Mammary epithelial cell (primary cell): ENCODE measurements at regions of chr3 and their contacts with region 1.

Region 1: GRCh38 chr3:184423561-184423960 is 43.7 kb downstream of the CHRD start:
- DNase-seq: peak; percentile 15
- H3K4me3 ChIP-seq: no peak overlapping the region
- H3K27ac ChIP-seq: no peak overlapping the region
- H3K4me1 ChIP-seq: peaks cover 5% of the 10 kb centered on the region
- H3K27me3 ChIP-seq: peaks cover 3% of the 10 kb centered on the region
- CTCF ChIP-seq: no peak

Region 2: DNA sequence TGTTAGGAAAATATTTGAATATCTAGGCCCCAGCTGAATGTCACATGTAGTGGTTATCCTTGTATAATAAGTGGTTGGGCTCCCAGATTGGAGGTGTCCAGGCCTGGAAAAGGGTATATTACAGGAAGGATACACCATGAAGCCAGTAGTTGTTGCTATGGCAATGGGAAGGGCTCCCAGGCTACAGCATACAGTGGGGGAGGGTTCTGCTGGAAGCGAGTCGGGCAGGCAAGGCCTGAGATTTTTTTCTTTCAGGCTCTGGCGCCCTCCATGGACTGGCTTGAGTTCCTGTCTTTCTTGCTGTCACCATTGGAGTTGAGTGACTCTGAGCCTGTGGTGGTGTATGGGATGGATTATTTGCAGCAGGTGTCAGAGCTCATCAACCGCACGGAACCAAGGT is 138.9 kb before region 1 on chr3:
- CTCF ChIA-PET with region 1: no interaction called
- dilution Hi-C with region 1: no loop called
- in situ Hi-C with region 1: no loop called
- intact Hi-C with region 1: no loop called
- DNase-seq: peak; percentile 50
- H3K4me3 ChIP-seq: no peak overlapping the region
- H3K27ac ChIP-seq: no peak overlapping the region
- H3K4me1 ChIP-seq: no peaks in the 10 kb centered on the region
- H3K27me3 ChIP-seq: no peaks in the 10 kb centered on the region
- CTCF ChIP-seq: peak; percentile 48 to 62

Region 3: GRCh38 chr3:184380191-184380626 is 43.4 kb before region 1 on chr3:
- CTCF ChIA-PET with region 1: no interaction called
- dilution Hi-C with region 1: no loop called
- in situ Hi-C with region 1: no loop called
- intact Hi-C with region 1: no loop called
- DNase-seq: no peak
- H3K4me3 ChIP-seq: peak overlapping the region in 2 of 3 experiments; percentile 15 to 43
- H3K27ac ChIP-seq: no peak overlapping the region
- H3K4me1 ChIP-seq: peaks cover 3% of the 10 kb centered on the region
- H3K27me3 ChIP-seq: peaks cover 18% of the 10 kb centered on the region
- CTCF ChIP-seq: no peak

Region 4: DNA sequence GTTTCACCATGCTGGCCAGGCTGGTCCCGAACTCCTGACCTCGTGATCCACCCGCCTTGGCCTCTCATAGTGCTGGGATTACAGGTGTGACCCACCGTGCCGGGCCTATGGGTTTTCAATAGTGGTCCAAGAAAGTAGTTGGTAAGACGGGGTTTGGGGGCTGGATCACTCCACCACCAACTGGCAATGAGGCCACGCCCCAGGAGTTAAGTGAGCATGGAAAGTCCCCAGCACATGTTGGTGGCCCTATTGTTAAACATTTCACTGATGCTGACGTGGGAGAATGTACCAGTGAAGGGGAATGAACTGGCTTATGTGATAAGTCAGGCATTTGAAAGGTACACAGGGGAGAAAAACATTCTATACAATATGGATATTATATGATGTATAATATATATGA is 36.7 kb after region 1 on chr3:
- CTCF ChIA-PET with region 1: no interaction called
- dilution Hi-C with region 1: loop called (anchors 5 kb)
- in situ Hi-C with region 1: loop called (anchors 5 kb)
- intact Hi-C with region 1: no loop called
- DNase-seq: no peak
- H3K4me3 ChIP-seq: no peak overlapping the region
- H3K27ac ChIP-seq: no peak overlapping the region
- H3K4me1 ChIP-seq: peaks cover 5% of the 10 kb centered on the region
- H3K27me3 ChIP-seq: no peaks in the 10 kb centered on the region
- CTCF ChIP-seq: no peak

Region 5: GRCh38 chr3:184491867-184492615 is 68.5 kb after region 1 on chr3:
- CTCF ChIA-PET with region 1: no interaction called
- dilution Hi-C with region 1: loop called (anchors 5 kb)
- in situ Hi-C with region 1: no loop called
- intact Hi-C with region 1: no loop called
- DNase-seq: no peak
- H3K4me3 ChIP-seq: peak overlapping the region; percentile 26 to 36 (median 28)
- H3K27ac ChIP-seq: no peak overlapping the region
- H3K4me1 ChIP-seq: peaks cover 3% of the 10 kb centered on the region
- H3K27me3 ChIP-seq: peaks cover 27% of the 10 kb centered on the region
- CTCF ChIP-seq: no peak